SK-N-SH (cell line): ENCODE measurements at regions of chr6 and their contacts with region 1.

Region 1: GRCh38 chr6:105384008-105384407 is 18.9 kb downstream of the PREP start:
- DNase-seq: no peak
- H3K4me3 ChIP-seq: no peak overlapping the region
- H3K27ac ChIP-seq: no peak overlapping the region
- H3K4me1 ChIP-seq: peaks cover 0 to 13% of the 10 kb centered on the region in 2 experiments; a peak in 2 of 4 replicates
- H3K27me3 ChIP-seq: no peaks in the 10 kb centered on the region
- CTCF ChIP-seq: no peak
- EP300 ChIP-seq: no peak
- RAD21 ChIP-seq: no peak

Region 2: DNA sequence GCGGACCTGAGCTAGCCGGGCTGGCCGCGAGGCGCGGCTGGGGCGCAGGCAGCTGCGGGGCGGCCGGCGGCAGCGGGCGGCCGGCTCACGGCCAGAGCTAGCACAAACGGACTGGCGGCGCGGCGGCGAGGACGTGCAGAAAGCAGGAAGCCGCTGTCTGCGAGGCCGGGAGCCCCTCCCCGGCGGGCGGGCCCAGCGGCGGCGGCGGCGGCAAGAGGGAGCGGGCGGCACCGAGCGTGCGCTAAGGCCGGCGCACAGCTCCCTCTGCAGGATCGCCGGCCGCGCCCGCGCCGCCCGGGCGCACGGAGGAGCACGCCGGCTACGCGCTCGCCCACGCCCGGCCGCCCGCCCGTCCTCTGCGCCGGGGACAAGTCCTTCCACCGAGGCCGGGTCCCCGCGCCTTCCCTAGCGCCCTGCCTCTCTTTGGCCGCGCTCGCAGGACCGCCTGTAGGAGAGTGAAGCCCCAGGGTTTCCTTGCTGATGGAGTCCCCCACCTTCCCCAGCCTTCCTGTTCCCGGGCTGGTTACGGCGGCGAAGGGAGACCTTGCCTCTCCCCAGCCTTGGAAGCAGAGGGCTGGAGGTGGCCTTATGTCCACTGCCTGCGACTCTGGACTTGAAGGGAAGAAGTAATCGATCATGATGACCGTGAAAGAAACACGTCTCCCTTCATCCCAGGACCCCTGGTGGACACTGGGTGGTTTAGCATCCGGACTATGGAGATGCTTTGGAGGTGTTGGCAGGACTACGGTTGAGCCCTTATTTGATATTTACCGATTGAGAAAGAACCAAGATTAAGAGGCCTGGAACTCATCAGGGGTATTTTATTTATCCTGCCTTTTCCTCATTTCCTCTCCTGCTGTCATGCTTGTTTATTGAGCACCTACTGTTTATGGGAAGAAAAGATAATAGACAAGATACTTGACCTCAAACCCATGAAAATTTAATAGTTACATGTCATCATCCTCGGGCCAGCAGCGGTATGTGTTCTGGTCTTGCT is 19.2 kb after region 1 on chr6 and contains the start of gene PREP:
- CTCF ChIA-PET with region 1: interaction called, 12 read pairs
- POLR2A ChIA-PET with region 1: no interaction called
- DNase-seq: peak; percentile 94
- H3K4me3 ChIP-seq: peak within 1 kb of the TSS; percentile 86 to 98
- H3K27ac ChIP-seq: peak within 1 kb of the TSS; percentile 71 to 94
- H3K4me1 ChIP-seq: peaks cover 0 to 22% of the 10 kb centered on the region in 2 experiments; a peak in 2 of 4 replicates
- H3K27me3 ChIP-seq: no peaks in the 10 kb centered on the region
- CTCF ChIP-seq: peak; percentile 89
- EP300 ChIP-seq: no peak
- RAD21 ChIP-seq: peak; percentile 62
- polyA plus RNA-seq, gene PREP: 15.9 and 20.9 TPM in 2 replicates